ENCODE measurements at regions of chr2 and their contacts with region 1.

Region 1: DNA sequence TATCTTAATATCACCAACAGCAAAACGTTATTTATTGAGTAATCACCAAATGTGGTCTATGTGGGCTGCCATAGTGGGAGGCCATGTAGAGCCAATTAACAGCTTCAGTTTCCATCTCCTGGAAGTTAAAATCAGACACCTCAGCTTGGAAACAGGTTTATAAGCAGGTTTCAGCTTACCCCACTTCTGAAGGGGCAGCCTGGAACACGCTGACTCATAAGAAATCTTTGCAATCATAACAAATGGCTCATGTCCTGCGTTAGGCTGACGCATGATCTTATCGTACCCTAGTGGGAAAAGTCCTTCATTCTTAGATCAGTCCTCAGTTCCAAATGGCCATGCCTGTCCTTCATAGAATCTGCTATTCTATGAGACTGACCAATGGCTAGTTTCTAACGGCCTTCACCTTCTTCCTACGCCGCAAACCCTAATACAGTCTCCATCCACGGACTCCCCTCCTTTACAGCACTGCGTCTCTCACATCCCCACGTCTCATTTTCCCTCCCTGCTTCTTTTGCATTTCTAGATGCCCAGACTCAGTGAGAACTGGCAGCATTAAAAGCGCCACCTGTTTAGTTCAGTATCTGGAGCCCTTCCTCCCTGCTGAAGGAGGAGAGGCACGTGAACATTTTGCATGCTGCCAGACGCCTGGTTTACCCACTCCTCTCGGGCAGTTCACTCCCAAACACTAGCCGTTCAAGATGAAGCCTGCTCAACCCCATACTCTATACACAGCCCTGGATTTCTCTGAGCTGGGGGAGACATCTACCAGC is 24.2 kb upstream of the BZW1 start:
- DNase-seq: peak in 1 of 2 donors; percentile 82
- H3K4me3 ChIP-seq: no peak overlapping the region
- H3K27ac ChIP-seq: peak overlapping the region; percentile 47 to 58
- H3K4me1 ChIP-seq: peaks cover 0 to 11% of the 10 kb centered on the region in 2 donors
- H3K27me3 ChIP-seq: no peaks in the 10 kb centered on the region
- CTCF ChIP-seq: no peak

Region 2: GRCh38 chr2:200742426-200742825 is 45.1 kb before region 1 on chr2:
- intact Hi-C with region 1: loop called (anchors 2 kb)
- DNase-seq: peak; percentile 69 to 91
- H3K4me3 ChIP-seq: peak overlapping the region in 1 of 2 donors; percentile 41
- H3K27ac ChIP-seq: peak overlapping the region; percentile 97
- H3K4me1 ChIP-seq: peaks cover 18 to 29% of the 10 kb centered on the region in 2 donors
- H3K27me3 ChIP-seq: no peaks in the 10 kb centered on the region
- CTCF ChIP-seq: no peak

Region 3: GRCh38 chr2:200864176-200864976 is 76.8 kb after region 1 on chr2 and contains the start of gene CLK1:
- intact Hi-C with region 1: no loop called
- DNase-seq: peak; percentile 89 to 99
- H3K4me3 ChIP-seq: peak within 1 kb of the TSS; percentile 74 to 80
- H3K27ac ChIP-seq: peak within 1 kb of the TSS; percentile 96 to 100
- H3K4me1 ChIP-seq: peaks cover 0 to 23% of the 10 kb centered on the region in 2 donors
- H3K27me3 ChIP-seq: no peaks in the 10 kb centered on the region
- CTCF ChIP-seq: no peak
- total RNA-seq, gene CLK1: 43.5 TPM